Activated T-helper 1 cell treated with anti-CD3 and anti-CD28 coated beads, Interleukin-12 subunit alpha, Interleukin-12 subunit beta, Interleukin-2, Interleukin-4 antibody, amounts not matched to agents 30 ng/mL and 10 ng/mL and 1 ng/mL, durations not matched to agents 14 hours and 24 hours and 36 hours (primary cell): ENCODE measurements at regions of chr5 and their contacts with region 1.

Region 1: GRCh38 chr5:134070725-134071613 is 43.5 kb upstream of the TCF7 start:
- DNase-seq: no peak
- H3K4me3 Mint-ChIP-seq: peak overlapping the region; percentile 77
- H3K27ac Mint-ChIP-seq: peak overlapping the region; percentile 91
- H3K4me1 Mint-ChIP-seq: peaks cover 52% of the 10 kb centered on the region
- H3K27me3 Mint-ChIP-seq: peaks cover 7% of the 10 kb centered on the region

Region 2: DNA sequence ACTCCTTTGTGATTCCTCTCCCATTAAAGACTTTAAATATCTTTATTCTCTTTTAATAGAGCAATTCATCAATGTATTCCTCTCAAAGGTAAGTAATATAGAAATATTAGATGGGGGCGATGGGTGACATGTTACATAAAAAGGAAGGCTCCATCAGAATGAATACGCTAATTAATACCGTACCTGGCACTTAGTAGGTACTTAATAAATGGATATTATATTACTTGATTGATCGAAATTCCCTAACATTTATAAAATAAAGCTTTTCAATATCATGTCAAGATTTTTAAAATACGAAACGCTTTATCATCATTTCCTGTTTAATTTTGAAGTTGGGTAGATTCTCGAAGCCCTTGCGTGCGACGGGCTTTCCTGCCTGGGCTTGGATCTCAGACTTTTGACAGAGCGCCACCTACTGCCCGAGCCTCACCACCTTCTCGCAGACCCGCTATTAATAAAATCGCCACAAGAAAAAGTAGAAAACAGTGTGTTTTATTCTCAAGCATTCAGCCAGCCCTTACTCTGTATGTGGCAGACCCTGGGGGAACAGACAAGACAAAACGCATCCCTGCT is 201.9 kb before region 1 on chr5:
- intact Hi-C with region 1: loop called (anchors 1 kb)
- DNase-seq: peak; percentile 57
- H3K4me3 Mint-ChIP-seq: no peak overlapping the region
- H3K27ac Mint-ChIP-seq: peak overlapping the region; percentile 35
- H3K4me1 Mint-ChIP-seq: peaks cover 28% of the 10 kb centered on the region
- H3K27me3 Mint-ChIP-seq: no peaks in the 10 kb centered on the region

Region 3: GRCh38 chr5:134041570-134042411 is 29.2 kb before region 1 on chr5:
- intact Hi-C with region 1: loop called (anchors 1 kb)
- DNase-seq: no peak
- H3K4me3 Mint-ChIP-seq: no peak overlapping the region
- H3K27ac Mint-ChIP-seq: no peak overlapping the region
- H3K4me1 Mint-ChIP-seq: peaks cover 16% of the 10 kb centered on the region
- H3K27me3 Mint-ChIP-seq: peaks cover 11% of the 10 kb centered on the region

Region 4: GRCh38 chr5:134086943-134087305 is 16.0 kb after region 1 on chr5:
- intact Hi-C with region 1: loop called (anchors 1 kb)
- DNase-seq: peak; percentile 62
- H3K4me3 Mint-ChIP-seq: peak overlapping the region; percentile 66
- H3K27ac Mint-ChIP-seq: peak overlapping the region; percentile 90
- H3K4me1 Mint-ChIP-seq: peaks cover 67% of the 10 kb centered on the region
- H3K27me3 Mint-ChIP-seq: peaks cover 27% of the 10 kb centered on the region

Region 5: GRCh38 chr5:134113902-134114875 is 43.2 kb after region 1 on chr5 and contains the start of gene TCF7:
- intact Hi-C with region 1: loop called (anchors 1 kb)
- DNase-seq: peak; percentile 66
- H3K4me3 Mint-ChIP-seq: peak within 1 kb of the TSS; percentile 83
- H3K27ac Mint-ChIP-seq: peak within 1 kb of the TSS; percentile 87
- H3K4me1 Mint-ChIP-seq: peaks cover 71% of the 10 kb centered on the region
- H3K27me3 Mint-ChIP-seq: peaks cover 30% of the 10 kb centered on the region
- total RNA-seq, gene TCF7: 76.3 and 77.2 TPM in 2 replicates

Region 6: DNA sequence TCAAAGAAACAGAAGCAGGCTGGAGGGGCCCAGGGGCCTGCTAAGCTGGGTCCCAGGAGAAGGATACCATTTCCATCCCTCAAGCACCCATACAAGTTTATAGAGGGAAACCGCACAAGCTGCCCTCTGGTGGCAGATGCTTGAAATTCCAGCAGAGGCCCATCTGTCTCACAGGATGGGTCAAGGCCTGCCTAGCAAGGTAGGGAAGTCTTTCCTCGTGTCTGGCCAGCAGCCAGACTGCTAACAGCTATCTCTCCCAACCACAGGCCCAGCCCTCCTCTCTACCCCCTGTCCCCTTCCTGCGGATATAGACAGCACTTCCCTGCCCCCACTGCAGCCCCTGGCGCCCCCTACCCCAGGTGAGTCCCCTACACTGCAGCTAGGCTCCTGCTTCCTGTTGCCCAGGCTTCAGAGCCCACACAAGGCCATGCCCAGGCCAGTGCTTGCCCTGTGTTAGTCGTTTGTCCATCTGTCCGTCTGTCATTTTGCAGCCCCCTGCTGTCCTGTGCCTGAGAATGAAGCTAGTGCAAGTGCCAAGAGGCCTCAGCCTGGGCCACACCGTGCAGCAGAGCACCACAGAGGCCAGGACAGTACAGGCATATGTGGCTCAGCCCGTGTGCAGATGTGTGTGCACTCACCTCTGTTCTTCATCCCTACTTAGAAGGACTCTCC is 69.7 kb after region 1 on chr5:
- intact Hi-C with region 1: loop called (anchors 1 kb)
- DNase-seq: peak; percentile 43
- H3K4me3 Mint-ChIP-seq: no peak overlapping the region
- H3K27ac Mint-ChIP-seq: no peak overlapping the region
- H3K4me1 Mint-ChIP-seq: peaks cover 65% of the 10 kb centered on the region
- H3K27me3 Mint-ChIP-seq: peaks cover 4% of the 10 kb centered on the region